AG04450 (cell line): ENCODE measurements at regions of chr2 and their contacts with region 1.

Region 1: DNA sequence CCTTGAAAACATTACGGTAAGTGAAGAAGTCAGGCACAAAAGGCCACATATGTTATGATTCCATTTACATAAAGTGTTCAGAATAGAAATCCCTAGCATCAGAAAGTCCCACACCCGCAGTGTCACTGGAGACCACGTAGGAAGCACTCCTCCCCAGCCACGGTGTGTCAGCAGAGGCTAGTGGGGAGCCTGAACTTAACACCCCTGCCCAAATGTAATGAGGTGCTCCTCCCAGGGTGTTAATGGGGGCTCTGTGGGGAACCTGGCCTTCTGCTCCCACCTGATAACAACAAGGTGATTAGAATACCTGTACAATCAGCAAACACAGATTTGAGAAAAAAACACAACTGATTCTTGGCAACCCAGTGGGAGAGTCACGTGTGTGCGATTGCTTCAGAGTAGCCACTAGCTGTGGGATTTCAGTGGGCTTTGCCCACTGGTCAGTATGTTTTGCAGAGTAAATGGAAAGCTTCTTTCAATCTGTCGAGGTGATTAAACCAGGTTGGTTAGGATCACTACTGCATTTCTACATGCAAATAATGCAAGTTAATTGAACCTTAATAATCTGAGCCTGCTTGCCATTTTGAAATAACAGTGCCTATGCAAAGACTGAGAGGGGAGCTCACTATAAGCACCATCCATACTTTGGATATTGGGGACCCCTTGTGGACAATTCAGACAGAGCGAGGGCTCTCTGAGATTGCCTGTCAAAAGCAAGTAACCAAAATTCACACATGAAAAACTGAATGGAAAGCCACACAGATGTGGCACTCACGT is 20.6 kb upstream of the ATRAID start:
- DNase-seq: peak; percentile 41
- H3K4me3 ChIP-seq: no peak overlapping the region
- H3K27ac ChIP-seq: no peak overlapping the region
- H3K27me3 ChIP-seq: peaks cover 5% of the 10 kb centered on the region
- CTCF ChIP-seq: peak; percentile 92

Region 2: GRCh38 chr2:27095745-27096651 is 95.2 kb before region 1 on chr2:
- CTCF ChIA-PET with region 1: interaction called, 136 read pairs
- POLR2A ChIA-PET with region 1: no interaction called
- DNase-seq: no peak
- H3K4me3 ChIP-seq: peak overlapping the region; percentile 32
- H3K27ac ChIP-seq: no peak overlapping the region
- H3K27me3 ChIP-seq: no peaks in the 10 kb centered on the region
- CTCF ChIP-seq: no peak

Region 3: GRCh38 chr2:27123302-27124231 is 67.7 kb before region 1 on chr2 and contains the start of gene ABHD1:
- CTCF ChIA-PET with region 1: interaction called, 10 read pairs
- POLR2A ChIA-PET with region 1: no interaction called
- DNase-seq: no peak
- H3K4me3 ChIP-seq: peak within 1 kb of the TSS; percentile 62
- H3K27ac ChIP-seq: no peak within 1 kb of the TSS
- H3K27me3 ChIP-seq: peaks cover 32% of the 10 kb centered on the region
- CTCF ChIP-seq: no peak
- polyA plus RNA-seq, gene ABHD1: 0.10 TPM in 1 of 2 replicates, not detected in the other

Region 4: DNA sequence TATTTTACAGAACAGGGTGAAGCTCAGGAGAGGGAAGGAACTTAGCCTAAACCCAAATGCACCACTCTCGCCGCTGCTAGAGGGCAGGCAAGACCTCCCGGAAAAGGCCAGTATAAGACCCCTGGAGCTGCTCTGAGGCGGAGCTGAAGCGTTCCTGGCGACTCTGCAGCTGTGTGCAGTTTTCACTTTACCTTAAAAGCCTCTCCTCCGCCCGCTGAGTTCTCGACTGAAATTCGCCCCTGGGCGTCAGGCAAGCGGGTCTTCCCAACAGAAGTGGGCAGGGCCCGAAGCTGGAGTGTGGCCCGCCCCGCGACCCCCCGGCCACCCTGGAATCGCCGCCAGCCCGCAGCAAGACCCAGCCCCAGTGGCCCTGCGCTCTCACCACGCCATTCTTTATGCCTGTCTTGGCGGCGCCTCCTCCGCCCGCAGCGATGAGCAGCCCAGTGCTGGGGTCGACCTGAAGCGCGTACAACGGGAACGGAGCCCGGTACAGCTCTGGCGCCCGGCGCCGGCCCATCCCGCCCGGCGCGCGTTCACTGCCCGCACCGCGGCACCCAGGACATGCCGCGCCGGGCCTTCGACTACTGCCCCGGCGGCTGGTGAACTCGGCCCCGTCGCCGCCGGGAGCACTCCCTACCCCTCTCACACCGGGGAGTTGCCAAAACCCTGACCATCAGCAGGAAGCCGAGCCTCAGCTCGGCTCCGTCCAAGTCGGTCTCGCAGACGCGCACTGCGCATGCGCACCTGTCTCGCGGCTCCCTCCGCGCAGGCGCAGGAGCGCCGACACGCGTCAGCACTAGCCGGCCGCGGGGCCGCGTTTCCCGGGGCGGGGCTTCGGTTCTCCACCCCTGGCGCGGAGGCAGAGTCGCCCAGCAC is 57.1 kb before region 1 on chr2 and contains the start of gene PREB:
- CTCF ChIA-PET with region 1: interaction called, 49 read pairs
- POLR2A ChIA-PET with region 1: interaction called, 6 read pairs
- DNase-seq: peak; percentile 87
- H3K4me3 ChIP-seq: peak within 1 kb of the TSS; percentile 94
- H3K27ac ChIP-seq: no peak within 1 kb of the TSS
- H3K27me3 ChIP-seq: peaks cover 11% of the 10 kb centered on the region
- CTCF ChIP-seq: peak; percentile 64
- polyA plus RNA-seq, gene PREB: 44.9 and 57.3 TPM in 2 replicates

Region 5: GRCh38 chr2:27170581-27171333 is 20.5 kb before region 1 on chr2:
- CTCF ChIA-PET with region 1: interaction called, 26 read pairs
- POLR2A ChIA-PET with region 1: no interaction called
- DNase-seq: no peak
- H3K4me3 ChIP-seq: no peak overlapping the region
- H3K27ac ChIP-seq: no peak overlapping the region
- H3K27me3 ChIP-seq: peaks cover 36% of the 10 kb centered on the region
- CTCF ChIP-seq: no peak

Region 6: GRCh38 chr2:27370026-27370815 is 179.0 kb after region 1 on chr2 and contains the starts of genes EIF2B4 and SNX17:
- CTCF ChIA-PET with region 1: no interaction called
- POLR2A ChIA-PET with region 1: no interaction called
- DNase-seq: peak; percentile 98
- H3K4me3 ChIP-seq: peak within 1 kb of the TSS; percentile 96
- H3K27ac ChIP-seq: peak within 1 kb of the TSS; percentile 84
- H3K27me3 ChIP-seq: no peaks in the 10 kb centered on the region
- CTCF ChIP-seq: peak; percentile 77
- polyA plus RNA-seq, gene EIF2B4: 43.0 and 52.2 TPM in 2 replicates
- polyA plus RNA-seq, gene SNX17: 123 and 137 TPM in 2 replicates